PC-3 (cell line): ENCODE measurements at regions of chr5 and their contacts with region 1.

Region 1: DNA sequence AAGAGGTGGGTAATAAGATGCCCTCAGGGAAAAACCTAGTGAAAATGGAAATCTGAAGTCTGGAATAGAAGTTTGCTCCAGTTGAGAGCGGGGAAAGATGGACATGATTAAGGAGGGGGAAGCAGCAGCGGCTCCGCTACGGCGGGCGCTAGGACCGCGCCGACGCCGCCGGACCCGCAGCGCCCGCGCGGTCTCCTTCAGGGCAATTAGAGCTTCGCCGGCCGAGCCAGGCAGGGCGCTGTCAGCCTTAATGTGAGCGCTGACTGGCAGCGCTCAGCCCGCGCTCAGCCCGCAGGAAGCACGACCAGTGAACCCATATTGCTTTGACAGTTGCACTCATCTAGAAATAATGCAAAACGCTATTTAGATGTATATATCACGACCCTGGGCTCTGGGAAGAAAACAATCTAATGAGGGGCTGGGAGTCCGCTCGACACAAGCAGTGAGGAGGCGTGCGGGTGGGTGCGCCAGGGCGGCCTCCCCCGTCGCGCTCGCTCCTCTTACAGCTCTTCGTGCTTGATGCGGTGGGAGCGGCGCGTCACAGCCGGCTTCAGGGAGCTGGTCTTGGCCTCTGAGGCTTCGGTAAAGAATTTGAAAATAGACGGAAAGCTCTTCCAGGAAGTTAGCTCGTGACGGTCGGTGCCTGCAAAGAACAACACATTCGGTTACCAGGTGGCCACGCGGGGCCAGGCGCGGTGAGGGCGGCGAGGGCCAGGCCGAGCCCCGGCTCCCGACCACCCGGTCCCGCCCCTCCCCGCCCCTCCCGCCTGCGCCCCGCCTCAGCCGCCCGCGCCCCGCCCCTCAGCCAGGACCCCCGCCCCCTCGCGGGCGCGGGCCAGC is 37.7 kb downstream of the NR2F1 start:
- DNase-seq: peak; percentile 80
- ATAC-seq: peak; percentile 90
- H3K4me3 ChIP-seq: peak overlapping the region; percentile 84
- H3K27ac ChIP-seq: peak overlapping the region; percentile 28; the same call in 1 of the 2 replicates
- H3K4me1 ChIP-seq: peaks cover 11% of the 10 kb centered on the region; the same call in 1 of the 2 replicates
- H3K27me3 ChIP-seq: no peaks in the 10 kb centered on the region
- CTCF ChIP-seq: peak; percentile 22; the same call in 1 of the 2 replicates

Region 2: GRCh38 chr5:93158841-93159240 is 461.9 kb before region 1 on chr5:
- CTCF ChIA-PET with region 1: no interaction called
- POLR2A ChIA-PET with region 1: no interaction called
- intact Hi-C with region 1: no loop called
- DNase-seq: no peak
- ATAC-seq: no peak
- H3K4me3 ChIP-seq: no peak overlapping the region
- H3K27ac ChIP-seq: no peak overlapping the region
- H3K4me1 ChIP-seq: peaks cover 36% of the 10 kb centered on the region
- H3K27me3 ChIP-seq: no peaks in the 10 kb centered on the region
- CTCF ChIP-seq: no peak

Region 3: DNA sequence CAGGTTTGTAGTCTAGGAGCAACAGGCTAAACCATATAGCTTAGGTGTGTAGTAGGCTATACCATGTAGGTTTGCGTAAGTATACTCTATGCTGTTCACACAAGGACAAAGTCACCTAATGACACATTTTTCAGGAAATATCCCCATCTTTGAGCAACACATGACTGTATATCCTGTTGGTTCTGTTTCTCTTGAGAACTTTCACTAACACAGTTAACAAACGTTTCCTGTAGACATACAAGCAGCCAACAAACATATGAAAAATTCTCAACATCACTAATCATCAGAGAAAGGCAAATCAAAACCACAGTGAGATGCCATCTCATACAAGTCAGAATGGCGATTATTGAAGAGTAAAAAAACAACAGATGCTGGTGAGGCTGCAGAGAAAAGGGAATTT is 107.9 kb before region 1 on chr5:
- CTCF ChIA-PET with region 1: no interaction called
- POLR2A ChIA-PET with region 1: no interaction called
- intact Hi-C with region 1: no loop called
- DNase-seq: peak; percentile 91
- ATAC-seq: peak; percentile 96
- H3K4me3 ChIP-seq: no peak overlapping the region
- H3K27ac ChIP-seq: peak overlapping the region; percentile 83
- H3K4me1 ChIP-seq: peaks cover 14% of the 10 kb centered on the region
- H3K27me3 ChIP-seq: no peaks in the 10 kb centered on the region
- CTCF ChIP-seq: no peak

Region 4: GRCh38 chr5:93677344-93678021 is 56.8 kb after region 1 on chr5:
- CTCF ChIA-PET with region 1: no interaction called
- POLR2A ChIA-PET with region 1: no interaction called
- intact Hi-C with region 1: loop called (anchors 5 kb)
- DNase-seq: peak; percentile 82
- ATAC-seq: peak; percentile 94
- H3K4me3 ChIP-seq: no peak overlapping the region
- H3K27ac ChIP-seq: no peak overlapping the region
- H3K4me1 ChIP-seq: peaks cover 11% of the 10 kb centered on the region
- H3K27me3 ChIP-seq: no peaks in the 10 kb centered on the region
- CTCF ChIP-seq: no peak

Region 5: DNA sequence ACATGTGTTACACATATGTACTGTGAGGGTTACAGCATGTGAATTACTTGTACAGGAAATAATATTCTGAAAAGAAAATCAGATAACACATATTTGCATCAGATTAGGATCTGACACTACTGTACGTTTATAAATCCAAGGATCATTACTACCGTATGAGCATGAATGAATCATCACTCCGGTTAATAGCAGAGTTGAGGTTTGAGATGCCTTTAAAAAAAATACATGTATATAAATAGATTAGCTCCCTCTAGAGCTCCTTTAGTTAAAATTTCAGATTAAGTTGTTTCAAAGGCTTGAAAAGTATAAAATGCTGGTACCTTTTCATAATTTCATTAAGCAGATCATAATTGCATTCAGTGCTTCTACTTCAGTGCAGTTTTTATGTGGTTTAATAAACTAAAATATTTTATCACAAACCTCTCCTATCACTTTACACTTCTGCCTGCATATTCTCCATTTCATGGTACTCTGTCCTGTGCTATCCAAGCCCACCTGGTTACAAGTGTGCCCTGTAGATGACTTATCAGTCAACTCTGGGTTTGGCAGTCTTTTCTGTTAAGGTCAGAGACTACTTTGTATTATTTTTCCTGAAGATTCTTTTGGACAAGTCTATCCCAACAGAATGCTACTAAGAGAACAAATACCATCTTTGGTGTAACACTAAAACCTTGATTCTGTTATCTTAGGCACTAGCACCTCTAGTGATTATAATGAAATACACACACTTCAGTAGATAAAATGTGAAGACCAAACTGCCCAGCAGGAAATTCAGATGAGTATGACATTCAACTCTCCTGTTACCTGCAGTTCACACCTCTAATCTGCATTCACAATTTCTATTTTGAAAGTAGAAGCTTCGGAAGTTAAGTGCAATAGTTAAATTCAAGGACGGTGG is 168.7 kb after region 1 on chr5:
- CTCF ChIA-PET with region 1: interaction called, 7 read pairs
- POLR2A ChIA-PET with region 1: no interaction called
- intact Hi-C with region 1: loop called (anchors 2 kb)
- DNase-seq: peak; percentile 90
- ATAC-seq: peak; percentile 92
- H3K4me3 ChIP-seq: no peak overlapping the region
- H3K27ac ChIP-seq: peak overlapping the region; percentile 27
- H3K4me1 ChIP-seq: peaks cover 26% of the 10 kb centered on the region
- H3K27me3 ChIP-seq: no peaks in the 10 kb centered on the region
- CTCF ChIP-seq: peak; percentile 62

Region 6: DNA sequence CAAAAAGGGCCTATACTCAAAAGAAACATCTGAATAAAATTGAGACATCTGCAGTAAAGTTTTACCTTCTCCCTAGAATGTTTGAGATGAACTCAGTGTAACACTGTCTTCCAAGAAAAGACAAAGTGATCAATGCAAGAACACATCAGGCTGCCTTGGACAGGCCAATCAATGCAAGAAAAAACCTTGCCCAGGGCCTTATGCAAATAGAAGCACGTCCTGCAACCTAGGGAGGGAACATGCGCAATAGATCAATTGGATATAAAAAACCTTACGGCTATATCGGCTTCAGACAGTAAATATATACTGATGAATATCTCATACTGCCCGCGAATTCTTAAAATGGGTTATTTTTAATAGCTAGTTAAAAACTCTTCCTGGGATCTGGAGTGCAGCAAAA is 187.1 kb after region 1 on chr5:
- CTCF ChIA-PET with region 1: no interaction called
- POLR2A ChIA-PET with region 1: no interaction called
- intact Hi-C with region 1: no loop called
- DNase-seq: no peak
- ATAC-seq: no peak
- H3K4me3 ChIP-seq: no peak overlapping the region
- H3K27ac ChIP-seq: no peak overlapping the region
- H3K4me1 ChIP-seq: no peaks in the 10 kb centered on the region
- H3K27me3 ChIP-seq: no peaks in the 10 kb centered on the region
- CTCF ChIP-seq: no peak